ENCODE measurements at regions of chr16 and their contacts with region 1.

Region 1: GRCh38 chr16:49857423-49858181 is 1.7 kb upstream of the ZNF423 start:
- DNase-seq: peak; percentile 60
- ATAC-seq: no peak
- H3K4me3 Mint-ChIP-seq: peak overlapping the region; percentile 44
- H3K27ac Mint-ChIP-seq: no peak overlapping the region
- H3K4me1 Mint-ChIP-seq: peaks cover 11% of the 10 kb centered on the region
- H3K27me3 Mint-ChIP-seq: peaks cover 57% of the 10 kb centered on the region

Region 2: DNA sequence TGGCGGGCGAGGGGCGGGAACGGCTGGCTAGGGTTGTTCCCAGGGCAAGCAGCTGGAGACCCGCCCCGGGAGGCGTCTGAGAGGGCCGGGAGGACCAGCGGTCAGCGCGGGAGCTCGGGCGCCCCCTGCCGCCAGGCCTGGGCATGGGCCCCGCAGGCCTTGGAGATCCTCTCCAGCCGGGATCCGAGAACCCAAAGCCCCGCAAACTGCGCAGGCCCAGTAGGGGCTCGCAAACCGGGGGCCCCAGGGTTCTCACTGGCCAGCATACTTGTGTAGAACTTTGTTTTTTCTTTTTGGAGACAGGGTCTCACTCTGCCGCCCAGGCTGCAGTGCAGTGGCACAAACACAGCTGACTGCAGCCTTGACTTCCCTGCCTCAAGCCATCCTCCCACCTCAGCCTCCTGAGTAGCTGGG is 19.1 kb after region 1 on chr16:
- CTCF ChIA-PET with region 1: interaction called, 11 read pairs
- DNase-seq: no peak
- ATAC-seq: peak; percentile 47
- H3K4me3 Mint-ChIP-seq: no peak overlapping the region
- H3K27ac Mint-ChIP-seq: no peak overlapping the region
- H3K4me1 Mint-ChIP-seq: no peaks in the 10 kb centered on the region
- H3K27me3 Mint-ChIP-seq: peaks cover 33% of the 10 kb centered on the region

Region 3: GRCh38 chr16:49937886-49938285 is 80.3 kb after region 1 on chr16:
- CTCF ChIA-PET with region 1: no interaction called
- DNase-seq: no peak
- ATAC-seq: no peak
- H3K4me3 Mint-ChIP-seq: no peak overlapping the region
- H3K27ac Mint-ChIP-seq: no peak overlapping the region
- H3K4me1 Mint-ChIP-seq: no peaks in the 10 kb centered on the region
- H3K27me3 Mint-ChIP-seq: peaks cover 24% of the 10 kb centered on the region